Activated CD8-positive, alpha-beta T cell treated with anti-CD3 and anti-CD28 coated beads for 36 hours (primary cell): ENCODE measurements at regions of chr1 and their contacts with region 1.

Region 1: GRCh38 chr1:211345719-211346118 is 19.1 kb downstream of the TRAF5 start:
- DNase-seq: no peak
- ATAC-seq: no peak
- H3K4me3 Mint-ChIP-seq: no peak overlapping the region
- H3K27ac Mint-ChIP-seq: no peak overlapping the region
- H3K4me1 Mint-ChIP-seq: peaks cover 83% of the 10 kb centered on the region
- H3K27me3 Mint-ChIP-seq: no peaks in the 10 kb centered on the region
- CTCF ChIP-seq: no peak

Region 2: DNA sequence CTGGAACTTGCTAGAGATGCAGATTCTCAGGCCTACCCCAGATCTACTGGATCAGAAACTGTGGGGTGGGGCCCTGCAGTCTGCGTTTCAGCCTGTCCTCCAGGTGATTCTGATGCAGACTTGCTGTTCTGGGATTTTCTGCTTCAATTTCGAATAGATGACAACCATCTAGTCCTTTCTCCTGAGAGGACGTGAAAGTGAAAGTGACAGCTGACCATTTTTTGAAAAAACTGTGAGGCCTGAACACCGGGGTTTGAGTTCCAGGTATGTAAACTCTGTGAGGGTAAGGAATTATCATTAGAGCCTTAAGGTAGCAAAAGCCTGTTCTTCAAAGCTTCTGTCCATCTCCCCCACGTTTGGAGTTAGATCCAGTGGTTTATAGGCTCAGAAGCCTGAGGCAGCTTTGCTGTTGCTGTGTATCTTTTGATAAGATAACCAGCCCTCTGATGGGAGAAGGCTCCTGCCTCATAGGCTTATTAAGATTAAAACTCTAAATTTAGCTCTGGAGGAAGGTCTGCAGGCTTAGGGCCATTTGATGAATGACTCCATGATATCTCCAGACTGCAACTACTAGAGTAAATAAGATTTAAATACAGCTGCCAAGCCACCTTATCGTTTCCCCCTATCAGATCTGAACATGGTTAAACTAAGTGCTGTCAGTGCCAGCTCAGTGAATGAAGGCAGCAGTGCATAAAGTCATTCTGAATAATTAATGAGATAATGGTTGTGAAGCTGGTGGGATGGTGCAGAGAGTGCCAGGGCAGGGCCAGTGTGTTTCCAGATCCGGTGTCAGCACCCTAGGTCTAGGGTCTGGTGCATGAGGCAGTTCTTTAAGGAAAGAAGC is 681.8 kb before region 1 on chr1:
- CTCF ChIA-PET with region 1: no interaction called
- POLR2A ChIA-PET with region 1: no interaction called
- intact Hi-C with region 1: no loop called
- DNase-seq: no peak
- ATAC-seq: no peak
- H3K4me3 Mint-ChIP-seq: no peak overlapping the region
- H3K27ac Mint-ChIP-seq: no peak overlapping the region
- H3K4me1 Mint-ChIP-seq: no peaks in the 10 kb centered on the region
- H3K27me3 Mint-ChIP-seq: no peaks in the 10 kb centered on the region
- CTCF ChIP-seq: no peak

Region 3: DNA sequence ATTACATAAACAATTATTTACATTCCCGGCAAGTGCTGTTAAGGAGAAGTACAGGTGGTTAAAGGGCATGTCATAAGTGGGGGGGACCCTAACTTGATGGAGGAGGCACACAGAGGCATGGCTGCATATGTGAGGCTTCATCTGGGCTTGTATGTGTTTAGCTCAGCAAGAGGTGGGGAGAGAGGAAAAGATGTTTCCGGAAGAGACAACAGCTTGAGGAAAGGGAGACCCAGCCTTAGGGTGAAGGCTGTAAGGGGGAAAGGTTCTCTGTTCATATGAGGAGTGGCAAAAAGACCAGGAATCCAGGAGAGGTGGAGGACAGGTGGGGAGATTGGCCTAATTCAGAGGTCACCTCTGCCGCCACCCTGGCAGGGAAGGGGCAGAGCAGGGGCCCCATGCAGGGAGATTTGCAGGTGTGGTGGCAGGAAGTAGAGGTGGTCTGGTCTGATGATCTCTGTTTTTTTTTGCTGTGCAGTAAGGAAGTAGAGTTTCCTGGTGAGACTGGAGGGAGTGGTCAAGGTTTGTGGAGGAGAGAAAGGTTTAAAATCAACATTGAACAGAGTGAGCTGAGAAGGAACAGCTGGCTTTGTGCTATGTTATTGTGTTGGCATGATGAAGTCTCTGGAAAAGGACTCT is 10.1 kb before region 1 on chr1:
- CTCF ChIA-PET with region 1: interaction called, 25 read pairs
- POLR2A ChIA-PET with region 1: interaction called, 4 read pairs
- intact Hi-C with region 1: no loop called
- DNase-seq: peak; percentile 43
- ATAC-seq: peak; percentile 60
- H3K4me3 Mint-ChIP-seq: peak overlapping the region; percentile 46
- H3K27ac Mint-ChIP-seq: peak overlapping the region; percentile 88
- H3K4me1 Mint-ChIP-seq: peaks cover 87% of the 10 kb centered on the region
- H3K27me3 Mint-ChIP-seq: no peaks in the 10 kb centered on the region
- CTCF ChIP-seq: no peak

Region 4: DNA sequence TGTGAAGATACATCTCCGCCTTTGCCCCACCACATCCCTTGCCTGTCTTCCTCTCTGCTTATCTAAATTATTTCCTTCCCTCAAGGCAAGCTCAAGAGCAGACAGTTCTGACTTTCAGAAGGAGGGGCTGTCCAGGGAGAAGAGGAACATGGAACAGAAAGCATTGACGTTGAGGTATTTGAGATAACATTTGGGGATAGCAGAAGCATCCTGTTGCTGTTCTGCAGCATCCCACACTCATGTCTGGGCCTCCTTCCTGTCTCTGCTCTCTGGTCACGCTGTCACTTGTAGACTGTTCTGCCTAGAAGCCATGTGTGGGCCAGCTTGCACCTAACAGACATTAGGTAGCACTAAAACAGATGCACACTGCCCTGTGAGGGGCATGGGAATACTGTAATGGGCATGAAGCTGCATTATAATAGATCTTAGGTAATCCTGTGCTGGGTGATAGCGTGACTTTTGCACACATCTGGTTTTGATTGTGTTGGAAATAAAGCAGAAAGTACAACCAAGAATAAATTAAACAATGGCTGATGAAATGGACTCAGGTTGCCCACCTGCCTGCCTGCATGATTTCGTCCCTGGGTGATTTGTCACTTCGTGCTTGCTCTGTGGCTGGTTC is 146.9 kb after region 1 on chr1:
- CTCF ChIA-PET with region 1: no interaction called
- POLR2A ChIA-PET with region 1: no interaction called
- intact Hi-C with region 1: no loop called
- DNase-seq: no peak
- ATAC-seq: peak; percentile 45
- H3K4me3 Mint-ChIP-seq: no peak overlapping the region
- H3K27ac Mint-ChIP-seq: no peak overlapping the region
- H3K4me1 Mint-ChIP-seq: peaks cover 4% of the 10 kb centered on the region
- H3K27me3 Mint-ChIP-seq: no peaks in the 10 kb centered on the region
- CTCF ChIP-seq: no peak